Caco-2 (cell line): ENCODE measurements at regions of chr11 and their contacts with region 1.

Region 1: GRCh38 chr11:120929664-120930154 is 94.2 kb upstream of the TBCEL start:
- DNase-seq: peak; percentile 77 to 81
- H3K4me3 ChIP-seq: no peak overlapping the region
- H3K4me3 Mint-ChIP-seq: no peak overlapping the region
- H3K27ac Mint-ChIP-seq: no peak overlapping the region
- H3K4me1 ChIP-seq: peaks cover 6% of the 10 kb centered on the region; the same call in 1 of the 2 replicates
- H3K4me1 Mint-ChIP-seq: peaks cover 10% of the 10 kb centered on the region
- H3K27me3 ChIP-seq: no peaks in the 10 kb centered on the region; the same call in 1 of the 2 replicates
- H3K27me3 Mint-ChIP-seq: peaks cover 5% of the 10 kb centered on the region
- CTCF ChIP-seq: peak; percentile 86 to 89

Region 2: GRCh38 chr11:120883404-120884080 is 46.2 kb before region 1 on chr11:
- CTCF ChIA-PET with region 1: interaction called, 14 read pairs
- POLR2A ChIA-PET with region 1: no interaction called
- intact Hi-C with region 1: no loop called
- DNase-seq: no peak
- H3K4me3 ChIP-seq: no peak overlapping the region
- H3K4me3 Mint-ChIP-seq: no peak overlapping the region
- H3K27ac Mint-ChIP-seq: no peak overlapping the region
- H3K4me1 ChIP-seq: no peaks in the 10 kb centered on the region
- H3K4me1 Mint-ChIP-seq: no peaks in the 10 kb centered on the region
- H3K27me3 ChIP-seq: no peaks in the 10 kb centered on the region; the same call in 1 of the 2 replicates
- H3K27me3 Mint-ChIP-seq: peaks cover 31% of the 10 kb centered on the region
- CTCF ChIP-seq: no peak

Region 3: DNA sequence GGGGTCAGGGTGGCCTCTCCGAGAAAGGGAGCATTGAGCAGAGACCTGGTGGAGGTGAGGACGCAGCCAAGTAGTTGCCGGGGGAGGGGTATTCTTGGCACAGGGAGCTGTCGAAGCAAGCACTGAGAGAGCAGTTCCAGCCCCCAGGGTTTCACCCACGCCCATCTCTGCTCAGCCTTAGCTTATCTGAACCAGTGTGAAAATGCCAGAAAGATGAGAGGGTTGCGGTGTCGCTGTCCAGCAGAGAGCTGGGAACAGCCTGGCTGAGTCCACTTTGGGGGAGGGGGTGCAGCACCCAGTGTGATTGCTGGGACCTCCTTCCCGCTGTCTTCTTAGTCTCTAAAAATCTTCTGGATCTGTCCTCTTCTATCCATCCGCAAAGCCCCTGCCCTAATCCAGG is 29.1 kb before region 1 on chr11:
- CTCF ChIA-PET with region 1: interaction called, 4 read pairs
- POLR2A ChIA-PET with region 1: no interaction called
- intact Hi-C with region 1: loop called (anchors 2 kb)
- DNase-seq: peak in 1 of 2 experiments; percentile 43
- H3K4me3 ChIP-seq: no peak overlapping the region
- H3K4me3 Mint-ChIP-seq: no peak overlapping the region
- H3K27ac Mint-ChIP-seq: no peak overlapping the region
- H3K4me1 ChIP-seq: no peaks in the 10 kb centered on the region
- H3K4me1 Mint-ChIP-seq: peaks cover 7% of the 10 kb centered on the region
- H3K27me3 ChIP-seq: no peaks in the 10 kb centered on the region
- H3K27me3 Mint-ChIP-seq: peaks cover 14% of the 10 kb centered on the region
- CTCF ChIP-seq: no peak

Region 4: DNA sequence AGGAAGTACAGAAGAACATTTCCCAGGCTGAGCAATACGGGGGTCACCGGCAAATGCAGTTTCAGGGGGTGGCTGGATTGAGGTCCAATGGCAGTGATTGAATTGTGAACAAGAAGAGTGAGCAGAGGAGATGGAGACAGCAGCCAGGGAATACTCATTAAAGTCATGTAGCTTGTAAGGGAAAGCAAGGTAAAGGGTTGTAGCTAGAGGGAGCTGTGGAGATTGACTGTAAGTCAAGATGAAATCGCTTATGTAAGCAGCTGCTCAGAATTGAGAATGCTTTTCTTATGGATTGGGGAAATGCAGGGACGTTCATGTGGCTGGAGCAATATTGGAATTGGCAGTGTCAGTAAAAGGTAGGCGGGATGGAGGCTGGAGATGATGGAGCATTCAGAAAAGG is 17.2 kb before region 1 on chr11:
- CTCF ChIA-PET with region 1: interaction called, 6 read pairs
- POLR2A ChIA-PET with region 1: no interaction called
- intact Hi-C with region 1: loop called (anchors 1 kb)
- DNase-seq: peak in 1 of 2 experiments; percentile 47
- H3K4me3 ChIP-seq: no peak overlapping the region
- H3K4me3 Mint-ChIP-seq: no peak overlapping the region
- H3K27ac Mint-ChIP-seq: no peak overlapping the region
- H3K4me1 ChIP-seq: peaks cover 4% of the 10 kb centered on the region; the same call in 1 of the 2 replicates
- H3K4me1 Mint-ChIP-seq: peaks cover 6% of the 10 kb centered on the region
- H3K27me3 ChIP-seq: 0 out of 2 replicates have a peak, but pooled peaks cover 3% of the 10 kb centered on the region
- H3K27me3 Mint-ChIP-seq: peaks cover 21% of the 10 kb centered on the region
- CTCF ChIP-seq: peak; percentile 62 to 78

Region 5: DNA sequence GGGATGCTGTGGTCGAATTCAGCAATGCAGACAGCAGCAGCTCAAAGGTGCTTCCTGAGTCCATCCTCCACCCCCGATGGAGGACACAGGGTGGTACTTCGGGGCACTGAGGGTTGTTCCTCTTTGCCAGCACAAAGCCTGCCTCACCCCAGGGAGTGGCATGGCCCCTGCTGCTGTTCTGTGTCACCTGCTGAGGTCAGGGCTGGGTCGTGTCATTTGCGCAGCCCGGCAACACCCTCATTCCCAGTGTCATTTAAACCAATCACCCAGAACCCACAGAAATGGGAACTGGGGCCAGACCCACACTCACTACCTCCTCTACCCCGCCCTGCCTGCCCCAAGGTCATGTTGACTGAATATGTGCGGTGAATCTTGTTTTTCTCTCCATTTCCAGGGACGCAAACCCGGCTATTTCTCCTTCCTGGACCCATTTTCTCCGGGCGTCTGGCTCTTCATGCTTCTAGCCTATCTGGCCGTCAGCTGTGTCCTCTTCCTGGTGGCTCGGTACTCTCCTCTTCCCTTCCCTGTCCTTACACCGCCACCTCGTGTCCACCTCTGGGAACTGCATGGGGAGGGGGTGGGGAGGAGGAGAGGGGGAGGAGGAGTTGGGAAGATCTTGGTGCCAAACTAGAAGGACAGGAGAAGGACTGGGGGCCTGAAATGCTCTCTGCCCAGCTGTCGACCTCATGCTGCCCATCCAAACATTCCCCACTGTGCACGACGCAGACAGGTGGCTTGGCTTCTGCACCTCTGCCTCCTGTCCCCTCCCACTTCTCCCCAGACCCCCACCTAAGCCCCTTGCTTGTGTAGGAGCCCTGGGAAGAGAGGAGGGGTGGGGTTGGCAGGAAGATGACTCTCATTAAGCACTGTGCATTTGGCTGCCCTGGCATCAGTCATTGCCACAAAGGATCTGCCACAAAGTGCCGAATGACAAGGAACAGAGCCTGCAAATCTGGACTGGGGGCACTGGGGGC is 23.0 kb after region 1 on chr11:
- CTCF ChIA-PET with region 1: interaction called, 3 read pairs
- POLR2A ChIA-PET with region 1: no interaction called
- intact Hi-C with region 1: loop called (anchors 2 kb)
- DNase-seq: peak; percentile 91 to 93
- H3K4me3 ChIP-seq: peak overlapping the region; percentile 13; the same call in 1 of the 2 replicates
- H3K4me3 Mint-ChIP-seq: peak overlapping the region; percentile 67
- H3K27ac Mint-ChIP-seq: no peak overlapping the region
- H3K4me1 ChIP-seq: peaks cover 5% of the 10 kb centered on the region; the same call in 1 of the 2 replicates
- H3K4me1 Mint-ChIP-seq: peaks cover 7% of the 10 kb centered on the region
- H3K27me3 ChIP-seq: peaks cover 1% of the 10 kb centered on the region; the same call in 1 of the 2 replicates
- H3K27me3 Mint-ChIP-seq: peaks cover 10% of the 10 kb centered on the region
- CTCF ChIP-seq: peak; percentile 97 to 99

Region 6: DNA sequence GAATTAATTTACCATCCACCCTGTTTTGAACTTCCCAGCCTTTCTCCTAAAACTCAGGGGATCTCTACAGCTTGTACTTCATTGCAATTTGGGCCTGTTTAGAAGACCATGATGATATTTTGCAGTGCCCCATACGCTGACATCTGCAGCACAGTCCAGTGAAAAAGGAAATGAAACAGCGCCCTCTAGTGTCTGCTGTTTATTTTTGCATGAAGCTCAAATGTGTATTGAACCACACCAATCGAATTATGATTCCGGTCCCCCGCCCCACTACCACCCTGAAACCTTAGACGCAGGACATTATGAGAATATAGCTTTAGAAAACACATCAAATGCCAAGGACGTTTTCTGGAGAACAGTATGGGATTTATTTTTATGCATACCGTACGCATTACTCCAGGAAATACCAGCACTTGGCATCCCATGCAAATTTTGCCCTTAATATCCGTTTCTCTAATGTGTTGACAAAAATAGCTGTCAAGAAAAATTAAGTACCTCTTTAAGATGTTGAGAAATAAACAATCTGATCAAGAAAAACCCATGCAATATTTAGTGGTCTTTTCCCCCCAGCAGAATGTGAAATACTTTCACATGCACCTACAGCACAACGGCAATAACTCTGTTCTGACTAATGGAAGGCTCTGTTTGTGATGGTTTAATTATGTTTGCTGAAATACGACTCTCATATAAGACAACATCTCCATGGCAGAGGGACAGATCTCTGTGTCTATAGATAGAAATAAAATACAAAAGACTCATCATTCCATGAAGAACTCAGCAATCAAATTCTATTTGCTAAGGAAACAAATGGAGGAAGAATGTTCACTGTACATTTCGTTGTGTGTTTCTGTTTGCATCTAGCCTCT is 265.3 kb after region 1 on chr11:
- CTCF ChIA-PET with region 1: interaction called, 4 read pairs
- POLR2A ChIA-PET with region 1: no interaction called
- intact Hi-C with region 1: loop called (anchors 1 kb)
- DNase-seq: peak; percentile 58 to 84
- H3K4me3 ChIP-seq: no peak overlapping the region
- H3K4me3 Mint-ChIP-seq: no peak overlapping the region
- H3K27ac Mint-ChIP-seq: no peak overlapping the region
- H3K4me1 ChIP-seq: no peaks in the 10 kb centered on the region
- H3K4me1 Mint-ChIP-seq: no peaks in the 10 kb centered on the region
- H3K27me3 ChIP-seq: no peaks in the 10 kb centered on the region
- H3K27me3 Mint-ChIP-seq: peaks cover 24% of the 10 kb centered on the region
- CTCF ChIP-seq: peak; percentile 92 to 94